Esophagus squamous epithelium (tissue), 5 donors: ENCODE measurements at regions of chr17 and their contacts with region 1.

Region 1: DNA sequence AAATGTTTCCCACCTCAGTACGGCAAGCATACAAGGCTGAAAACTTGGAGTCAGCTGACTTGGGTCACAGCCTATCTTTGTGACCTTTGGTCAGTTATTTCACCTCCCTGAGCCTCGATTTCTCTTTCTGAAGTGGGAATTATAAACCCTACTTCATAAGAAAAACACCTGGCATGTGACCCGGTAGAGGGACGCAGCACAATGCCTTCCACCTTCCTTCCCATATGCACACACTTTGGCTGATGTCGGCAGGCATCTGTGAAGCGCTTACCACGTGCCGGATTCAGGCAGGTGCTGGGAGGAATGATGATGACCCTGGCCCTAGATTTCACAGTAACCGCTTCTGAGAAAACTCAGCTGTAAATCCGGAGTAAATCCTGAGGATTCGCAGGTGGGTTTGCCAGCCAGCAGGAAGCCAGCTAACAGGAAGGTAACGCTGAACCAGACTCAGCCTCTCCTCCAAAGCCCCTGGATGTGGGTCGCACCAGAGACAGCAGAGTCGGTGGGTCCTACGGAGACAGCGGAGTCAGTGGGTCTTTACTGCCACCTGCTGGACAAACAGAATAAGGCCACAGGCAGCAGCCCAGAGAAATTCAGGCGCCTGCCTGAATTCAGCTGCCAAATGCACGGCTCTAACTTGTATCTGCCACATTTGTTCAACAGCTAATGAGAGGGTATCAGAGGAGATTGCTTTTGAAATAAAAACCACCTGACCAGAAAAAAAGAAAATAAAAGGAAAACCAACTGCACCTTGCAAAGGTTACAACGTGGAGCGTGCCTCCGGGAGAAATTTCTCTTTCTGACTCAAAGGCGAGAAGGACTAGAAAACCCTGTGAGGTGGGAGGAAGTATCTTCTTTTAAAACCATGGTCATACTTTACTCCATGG is 16.6 kb downstream of the COPRS start:
- DNase-seq: no peak
- H3K4me3 ChIP-seq: peak overlapping the region in 3 of 4 donors; percentile 13 to 37 (median 17)
- H3K27ac ChIP-seq: peak overlapping the region in 3 of 4 donors; percentile 35 to 70 (median 68)
- H3K4me1 ChIP-seq: peaks cover 4 to 22% (median 18%) of the 10 kb centered on the region in 3 donors
- H3K27me3 ChIP-seq: peaks cover 0 to 8% (median 0%) of the 10 kb centered on the region in 4 donors
- CTCF ChIP-seq: peak; percentile 93 to 99 (median 98)
- POLR2A ChIP-seq: no peak

Region 2: GRCh38 chr17:31313982-31314784 is 528.2 kb before region 1 on chr17 and contains the start of gene EVI2B:
- intact Hi-C with region 1: no loop called
- DNase-seq: no peak
- H3K4me3 ChIP-seq: peak within 1 kb of the TSS; percentile 5 to 53 (median 32)
- H3K27ac ChIP-seq: peak within 1 kb of the TSS; percentile 21 to 79 (median 60)
- H3K4me1 ChIP-seq: peaks cover 0 to 13% (median 0%) of the 10 kb centered on the region in 3 donors
- H3K27me3 ChIP-seq: no peaks in the 10 kb centered on the region
- CTCF ChIP-seq: no peak
- POLR2A ChIP-seq: peak in 1 of 4 donors; percentile 52
- total RNA-seq, gene EVI2B: 1.7 to 13.4 (median 4.2) TPM

Region 3: GRCh38 chr17:31433091-31433790 is 409.2 kb before region 1 on chr17:
- intact Hi-C with region 1: loop called (anchors 10 kb)
- DNase-seq: no peak
- H3K4me3 ChIP-seq: no peak overlapping the region
- H3K27ac ChIP-seq: no peak overlapping the region
- H3K4me1 ChIP-seq: peaks cover 0 to 5% (median 0%) of the 10 kb centered on the region in 3 donors
- H3K27me3 ChIP-seq: peaks cover 0 to 46% (median 0%) of the 10 kb centered on the region in 4 donors
- CTCF ChIP-seq: no peak
- POLR2A ChIP-seq: no peak

Region 4: GRCh38 chr17:31558748-31559644 is 283.4 kb before region 1 on chr17:
- intact Hi-C with region 1: loop called (anchors 5 kb)
- DNase-seq: no peak
- H3K4me3 ChIP-seq: peak overlapping the region; percentile 66 to 91 (median 70)
- H3K27ac ChIP-seq: peak overlapping the region; percentile 91 to 93 (median 92)
- H3K4me1 ChIP-seq: peaks cover 25 to 53% (median 30%) of the 10 kb centered on the region in 3 donors
- H3K27me3 ChIP-seq: no peaks in the 10 kb centered on the region
- CTCF ChIP-seq: peak; percentile 74 to 96 (median 93)
- POLR2A ChIP-seq: peak in 2 of 4 donors; percentile 10 to 69

Region 5: DNA sequence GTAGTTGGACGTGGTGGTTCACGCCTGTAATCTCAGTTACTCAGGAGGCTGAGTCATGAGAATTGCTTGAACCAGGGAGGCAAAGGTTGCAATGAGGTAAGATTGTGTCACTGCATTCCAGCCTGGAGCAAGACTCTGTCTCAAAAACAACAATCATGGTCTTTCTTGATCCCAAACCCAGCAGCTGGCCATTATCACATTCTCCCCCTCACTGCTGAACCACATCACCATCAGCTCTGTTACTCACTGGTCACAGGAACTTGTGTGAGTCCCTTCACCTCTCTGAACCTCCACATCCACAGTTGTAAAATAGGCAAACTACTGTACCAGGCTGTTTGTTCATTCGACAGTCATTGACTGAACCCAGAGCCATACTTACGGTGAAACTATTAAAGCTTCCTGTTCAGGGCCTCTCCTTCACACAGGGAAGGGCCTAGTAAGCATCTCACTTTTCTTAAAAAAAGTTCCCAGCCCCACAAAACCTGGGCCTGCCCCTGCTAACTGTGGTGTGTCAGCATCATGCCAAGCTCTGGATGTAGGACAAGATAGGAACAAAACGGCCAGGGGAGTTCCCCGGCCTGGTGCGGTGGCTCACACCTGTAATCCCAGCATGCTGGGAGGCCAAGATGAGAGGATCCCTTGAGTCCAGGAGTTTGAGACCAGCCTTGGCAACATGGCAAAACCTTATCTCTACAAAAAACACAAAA is 88.0 kb before region 1 on chr17:
- intact Hi-C with region 1: no loop called
- DNase-seq: no peak
- H3K4me3 ChIP-seq: no peak overlapping the region
- H3K27ac ChIP-seq: no peak overlapping the region
- H3K4me1 ChIP-seq: peaks cover 0 to 8% (median 0%) of the 10 kb centered on the region in 3 donors
- H3K27me3 ChIP-seq: no peaks in the 10 kb centered on the region
- CTCF ChIP-seq: no peak
- POLR2A ChIP-seq: no peak

Region 6: DNA sequence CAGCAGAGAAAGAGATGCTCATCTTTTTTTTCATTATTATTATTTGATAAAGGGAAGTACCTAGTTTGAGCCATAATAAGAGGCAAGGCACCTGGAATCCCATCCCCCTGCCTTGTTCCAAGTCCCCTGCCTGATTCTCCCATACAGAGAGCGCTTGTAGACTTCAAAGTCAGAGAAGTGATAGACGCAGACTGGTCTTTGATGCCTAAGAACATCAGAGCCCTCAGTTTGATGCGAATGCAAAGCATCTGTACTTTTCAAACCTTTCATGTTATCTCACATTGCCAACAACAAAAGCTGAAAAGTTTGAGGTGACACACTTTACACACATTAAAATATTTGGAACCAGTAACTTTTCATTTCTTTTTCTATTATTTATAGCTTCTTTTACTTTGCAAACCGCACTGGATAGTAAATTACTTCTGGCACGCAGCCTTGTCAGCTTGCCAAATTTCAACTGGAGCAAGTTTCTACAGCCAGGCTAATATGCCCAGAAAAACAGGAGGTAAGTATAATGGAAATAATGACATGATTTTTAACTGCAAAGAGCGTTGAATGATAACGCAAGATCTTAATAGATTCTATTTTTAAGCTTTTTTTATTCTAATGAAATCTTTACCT is 65.0 kb after region 1 on chr17:
- intact Hi-C with region 1: no loop called
- DNase-seq: no peak
- H3K4me3 ChIP-seq: no peak overlapping the region
- H3K27ac ChIP-seq: no peak overlapping the region
- H3K4me1 ChIP-seq: peaks cover 0 to 18% (median 7%) of the 10 kb centered on the region in 3 donors
- H3K27me3 ChIP-seq: no peaks in the 10 kb centered on the region
- CTCF ChIP-seq: no peak
- POLR2A ChIP-seq: no peak